IMR-90 (cell line): ENCODE measurements at regions of chr9 and their contacts with region 1.

Region 1: DNA sequence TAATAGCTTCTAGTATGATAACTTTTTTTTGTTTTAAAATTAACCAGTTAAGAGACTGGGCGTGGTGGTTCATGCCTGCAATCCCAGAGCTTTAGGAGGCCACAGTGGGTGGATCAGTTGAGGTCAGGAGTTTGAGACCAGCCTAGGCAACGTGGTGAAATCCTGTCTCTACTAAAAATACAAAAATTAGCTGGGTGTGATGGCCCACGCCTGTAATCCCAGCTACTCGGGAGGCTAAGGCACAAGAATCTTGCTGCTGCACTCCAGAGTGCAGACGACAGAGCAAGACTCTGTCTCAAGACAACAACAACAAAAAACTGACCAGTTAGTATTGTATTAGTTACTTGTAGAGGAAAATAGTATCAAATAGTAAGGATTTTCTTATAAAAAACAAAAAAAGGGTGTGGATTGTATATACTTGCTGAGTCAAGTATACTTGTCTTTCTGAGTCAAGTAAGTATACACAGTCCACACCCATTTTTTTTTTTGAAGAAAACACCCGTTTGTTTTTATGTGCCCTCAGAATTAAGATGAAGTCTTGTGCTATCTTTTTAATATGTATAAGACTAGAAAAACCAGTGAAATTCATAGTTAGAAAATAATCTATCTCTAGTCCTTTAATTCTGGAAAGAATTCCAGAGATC is 25.3 kb downstream of the UBAP1 start:
- DNase-seq: no peak
- ATAC-seq: peak; percentile 32; the same call in 1 of the 2 replicates
- H3K4me3 ChIP-seq: no peak overlapping the region
- H3K27ac ChIP-seq: no peak overlapping the region
- H3K4me1 ChIP-seq: peaks cover 2% of the 10 kb centered on the region; the same call in 1 of the 2 replicates
- H3K27me3 ChIP-seq: no peaks in the 10 kb centered on the region
- CTCF ChIP-seq: no peak
- POLR2A ChIP-seq: no peak
- RAD21 ChIP-seq: no peak

Region 2: GRCh38 chr9:34185778-34186551 is 18.1 kb before region 1 on chr9:
- CTCF ChIA-PET with region 1: no interaction called
- POLR2A ChIA-PET with region 1: no interaction called
- dilution Hi-C with region 1: no loop called
- in situ Hi-C with region 1: no loop called
- intact Hi-C with region 1: loop called (anchors 1 kb)
- DNase-seq: peak; percentile 93
- ATAC-seq: peak; percentile 76
- H3K4me3 ChIP-seq: no peak overlapping the region
- H3K27ac ChIP-seq: no peak overlapping the region; the same call in 1 of the 2 replicates
- H3K4me1 ChIP-seq: peaks cover 7% of the 10 kb centered on the region
- H3K27me3 ChIP-seq: no peaks in the 10 kb centered on the region
- CTCF ChIP-seq: no peak
- POLR2A ChIP-seq: no peak
- RAD21 ChIP-seq: no peak